ENCODE measurements at regions of chrX and their contacts with region 1.

Region 1: GRCh38 chrX:107654872-107655761 is 26.8 kb downstream of the PRPS1 start:
- DNase-seq: peak; percentile 63
- ATAC-seq: peak; percentile 69 to 86

Region 2: DNA sequence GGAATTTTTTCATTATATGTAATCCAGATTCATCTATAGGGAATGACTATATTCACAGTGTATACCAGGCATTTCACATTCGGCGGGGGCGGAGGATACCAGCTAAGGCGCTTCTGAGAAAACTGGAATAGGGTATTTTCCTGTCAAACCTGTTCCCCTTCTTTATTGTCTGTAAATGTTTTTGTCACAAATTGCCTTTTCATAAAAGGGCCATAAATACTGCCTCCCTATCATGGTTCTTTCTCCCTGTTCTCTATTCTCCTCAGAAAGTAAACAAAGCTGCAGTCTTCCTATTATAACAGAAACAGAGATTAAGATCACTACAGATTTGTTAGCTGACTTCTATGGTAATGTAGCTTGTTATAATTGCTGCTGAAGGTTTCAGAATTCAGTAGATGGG is 202.7 kb after region 1 on chrX:
- intact Hi-C with region 1: no loop called
- DNase-seq: no peak
- ATAC-seq: no peak

Region 3: DNA sequence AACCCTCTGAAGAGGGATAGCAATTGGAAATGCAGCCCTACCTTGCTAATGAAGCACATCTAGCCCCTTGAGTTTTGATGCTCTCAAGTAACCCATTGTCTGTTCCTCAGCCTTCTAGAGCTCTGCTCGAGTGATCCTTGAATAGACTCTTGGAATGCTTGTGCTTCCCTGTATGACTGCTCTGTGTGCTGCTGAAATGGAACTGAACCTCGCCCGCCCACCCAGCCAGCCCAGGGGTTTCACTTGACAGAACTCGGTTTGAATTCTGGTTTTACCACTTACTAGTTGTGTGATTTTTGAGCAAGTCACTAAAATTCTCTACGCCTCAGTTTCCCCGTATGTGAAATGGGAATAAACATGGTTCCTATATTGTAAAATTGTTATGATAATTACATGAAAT is 247.6 kb after region 1 on chrX:
- intact Hi-C with region 1: loop called in 1 of 2 experiments (anchors 10 kb)
- DNase-seq: no peak
- ATAC-seq: no peak